B cell (primary cell): ENCODE measurements at regions of chr15 and their contacts with region 1.

Region 1: DNA sequence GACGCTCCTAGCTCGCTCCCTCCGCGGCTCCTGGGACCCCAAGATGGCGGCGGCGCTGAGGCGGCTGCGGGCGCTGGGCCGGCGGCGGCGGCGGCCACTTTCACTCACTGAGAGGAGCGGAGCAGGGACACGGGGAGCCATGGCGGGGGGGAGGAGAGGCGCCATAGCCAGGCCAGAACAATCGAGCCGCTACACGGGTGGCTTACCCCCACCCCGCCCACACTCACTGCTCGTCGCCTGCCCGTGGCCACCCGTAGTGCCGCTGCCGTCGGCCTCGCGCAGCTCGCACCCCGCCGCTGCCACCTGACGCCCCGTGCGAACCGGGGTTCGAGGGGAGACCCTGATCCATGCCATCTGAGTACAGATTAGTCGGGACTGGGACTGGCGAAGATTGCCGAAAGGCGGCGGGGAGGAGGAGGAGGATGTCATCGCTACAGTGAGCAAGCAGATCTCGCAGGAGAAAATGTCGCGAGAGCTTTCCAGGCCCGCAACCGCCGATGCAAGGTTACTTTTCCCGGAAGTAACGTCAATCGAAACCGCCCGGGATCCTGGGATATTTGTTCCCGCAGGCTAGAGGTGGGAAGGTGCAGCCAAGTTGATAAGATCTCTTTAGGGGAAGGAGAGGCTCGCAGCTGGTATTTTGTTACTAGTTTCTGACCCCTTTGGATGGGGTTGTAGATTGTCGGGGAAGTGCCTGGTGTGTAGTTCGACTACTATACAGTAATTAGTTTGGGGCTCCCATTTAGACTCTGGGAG is at the start of gene INO80:
- DNase-seq: peak; percentile 98
- ATAC-seq: peak; percentile 66
- H3K4me3 ChIP-seq: peak within 1 kb of the TSS; percentile 73 to 92 (median 80)
- H3K4me3 Mint-ChIP-seq: peak within 1 kb of the TSS; percentile 100
- H3K27ac ChIP-seq: peak within 1 kb of the TSS; percentile 93
- H3K27ac Mint-ChIP-seq: peak within 1 kb of the TSS; percentile 100
- H3K4me1 ChIP-seq: peaks cover 16 to 17% of the 10 kb centered on the region in 2 donors
- H3K4me1 Mint-ChIP-seq: peaks cover 26% of the 10 kb centered on the region
- H3K27me3 ChIP-seq: no peaks in the 10 kb centered on the region
- H3K27me3 Mint-ChIP-seq: no peaks in the 10 kb centered on the region
- CTCF ChIP-seq: no peak
- total RNA-seq, gene INO80: 55.7 and 57.8 TPM in 2 replicates

Region 2: DNA sequence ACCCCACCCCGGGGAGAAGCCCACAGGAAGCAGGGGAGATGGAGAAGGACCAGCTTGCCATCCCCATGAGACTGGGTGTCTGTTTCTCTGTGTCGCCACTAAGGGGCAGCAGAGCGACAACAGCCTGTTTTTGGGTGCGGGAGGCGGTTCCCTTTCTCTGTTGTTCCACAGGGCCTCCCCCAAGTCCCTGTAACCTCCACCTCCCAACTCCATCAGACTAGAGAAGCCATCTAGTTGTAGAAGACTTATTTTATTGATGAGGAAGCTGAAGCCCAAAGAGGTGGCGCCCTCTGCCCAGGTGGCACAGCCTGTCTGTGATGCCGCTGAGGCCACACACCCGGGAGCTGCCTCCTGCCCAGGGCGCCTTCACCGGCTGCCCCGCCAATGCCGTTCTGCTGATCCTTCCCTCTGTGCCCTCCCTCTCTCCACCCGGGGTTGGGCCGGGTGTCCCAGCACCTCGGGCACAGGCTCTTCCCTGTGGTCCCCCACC is 771.6 kb before region 1 on chr15:
- CTCF ChIA-PET with region 1: no interaction called
- POLR2A ChIA-PET with region 1: no interaction called
- intact Hi-C with region 1: no loop called
- DNase-seq: peak; percentile 77
- ATAC-seq: peak; percentile 88
- H3K4me3 ChIP-seq: no peak overlapping the region
- H3K4me3 Mint-ChIP-seq: no peak overlapping the region
- H3K27ac ChIP-seq: no peak overlapping the region
- H3K27ac Mint-ChIP-seq: no peak overlapping the region
- H3K4me1 ChIP-seq: no peaks in the 10 kb centered on the region
- H3K4me1 Mint-ChIP-seq: no peaks in the 10 kb centered on the region
- H3K27me3 ChIP-seq: no peaks in the 10 kb centered on the region
- H3K27me3 Mint-ChIP-seq: no peaks in the 10 kb centered on the region
- CTCF ChIP-seq: peak; percentile 83

Region 3: DNA sequence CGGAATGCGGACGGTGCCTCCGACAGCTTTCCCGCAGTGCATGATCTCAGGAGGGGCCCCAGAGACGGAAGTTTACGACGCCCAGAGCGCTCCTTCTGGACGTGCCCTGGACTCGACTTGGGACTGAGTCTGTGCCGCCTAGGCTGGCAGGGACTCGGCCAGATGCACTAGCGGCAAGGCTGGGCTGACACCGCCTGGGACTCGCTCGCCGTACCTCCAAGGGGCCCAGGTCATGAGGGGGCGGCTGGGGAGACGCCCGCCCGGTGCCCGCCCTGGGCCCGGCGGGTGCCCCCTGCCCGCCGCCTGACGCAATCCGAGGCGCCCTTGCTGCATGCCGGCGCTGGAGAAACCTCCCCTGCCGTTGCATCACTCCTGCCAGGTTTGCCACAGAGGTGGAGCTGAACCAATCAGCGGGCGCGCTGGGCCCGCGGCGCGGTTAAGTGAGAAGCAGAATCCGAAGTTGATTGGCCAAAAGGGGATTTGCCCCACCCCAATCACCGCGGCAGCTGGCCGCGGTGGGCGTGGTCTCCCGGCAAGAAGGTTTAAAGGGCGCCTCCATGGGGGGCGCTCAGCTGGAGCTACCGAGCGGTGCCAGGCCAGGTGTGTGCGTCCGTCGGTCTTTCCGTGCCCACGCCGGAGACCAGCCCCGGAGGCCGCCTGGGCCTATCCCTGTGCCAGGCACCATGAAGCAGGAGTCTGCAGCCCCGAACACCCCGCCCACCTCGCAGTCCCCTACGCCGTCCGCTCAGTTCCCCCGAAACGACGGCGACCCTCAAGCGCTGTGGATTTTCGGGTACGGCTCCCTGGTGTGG is 163.2 kb before region 1 on chr15 and contains the start of gene CHAC1:
- CTCF ChIA-PET with region 1: no interaction called
- POLR2A ChIA-PET with region 1: interaction called, 3 read pairs
- intact Hi-C with region 1: loop called (anchors 5 kb)
- DNase-seq: peak; percentile 95
- ATAC-seq: peak; percentile 97
- H3K4me3 ChIP-seq: peak within 1 kb of the TSS; percentile 40 to 74 (median 64)
- H3K4me3 Mint-ChIP-seq: peak within 1 kb of the TSS; percentile 93
- H3K27ac ChIP-seq: peak within 1 kb of the TSS in 1 of 2 donors; percentile 25
- H3K27ac Mint-ChIP-seq: peak within 1 kb of the TSS; percentile 84
- H3K4me1 ChIP-seq: peaks cover 9 to 14% of the 10 kb centered on the region in 2 donors
- H3K4me1 Mint-ChIP-seq: peaks cover 18% of the 10 kb centered on the region
- H3K27me3 ChIP-seq: peaks cover 0 to 14% (median 2%) of the 10 kb centered on the region in 4 experiments
- H3K27me3 Mint-ChIP-seq: peaks cover 9% of the 10 kb centered on the region
- CTCF ChIP-seq: no peak
- total RNA-seq, gene CHAC1: 3.1 and 3.6 TPM in 2 replicates

Region 4: DNA sequence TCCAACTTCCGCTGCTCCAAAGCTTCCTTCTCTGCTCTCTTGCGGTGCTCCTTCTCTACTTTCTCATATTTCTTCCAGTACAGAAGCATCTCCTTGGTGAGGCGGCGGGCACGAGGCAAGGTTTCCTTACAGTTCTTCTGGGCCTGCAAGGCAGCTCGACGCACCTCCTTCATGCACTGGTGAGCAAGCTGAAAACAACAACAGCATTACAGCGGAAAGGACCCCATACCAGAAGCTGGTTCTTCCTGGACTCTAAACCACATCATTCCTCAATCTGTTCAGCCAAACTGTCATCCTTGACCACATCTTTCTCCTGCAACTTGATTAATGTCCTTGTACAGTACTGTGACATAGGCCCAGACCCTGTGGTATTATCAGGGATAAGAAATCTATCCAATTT is 36.6 kb before region 1 on chr15:
- CTCF ChIA-PET with region 1: no interaction called
- POLR2A ChIA-PET with region 1: no interaction called
- intact Hi-C with region 1: loop called (anchors 5 kb)
- DNase-seq: peak; percentile 60
- ATAC-seq: peak; percentile 83
- H3K4me3 ChIP-seq: no peak overlapping the region
- H3K4me3 Mint-ChIP-seq: peak overlapping the region; percentile 73
- H3K27ac ChIP-seq: peak overlapping the region; percentile 79 to 84
- H3K27ac Mint-ChIP-seq: peak overlapping the region; percentile 93
- H3K4me1 ChIP-seq: peaks cover 20 to 24% of the 10 kb centered on the region in 2 donors
- H3K4me1 Mint-ChIP-seq: peaks cover 21% of the 10 kb centered on the region
- H3K27me3 ChIP-seq: no peaks in the 10 kb centered on the region
- H3K27me3 Mint-ChIP-seq: no peaks in the 10 kb centered on the region
- CTCF ChIP-seq: no peak

Region 5: DNA sequence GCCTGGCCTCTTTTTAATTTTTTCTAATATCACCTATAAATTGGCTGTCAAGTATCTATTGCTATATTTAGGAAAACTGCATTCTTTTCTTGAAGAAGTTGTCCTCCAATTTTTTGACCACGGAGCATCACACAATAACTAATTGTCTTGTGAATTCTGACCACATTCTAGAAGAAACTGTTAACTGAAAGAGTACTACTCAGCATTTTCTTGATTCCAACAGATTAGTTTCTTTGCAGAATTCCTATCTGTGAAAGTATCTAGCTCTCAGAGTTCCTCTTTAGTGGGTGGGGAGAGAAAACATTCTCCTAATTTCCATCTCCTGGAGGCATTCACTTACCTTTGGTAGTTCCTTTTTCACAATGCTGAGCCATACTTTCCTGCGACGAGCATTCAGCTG is 31.3 kb before region 1 on chr15:
- CTCF ChIA-PET with region 1: no interaction called
- POLR2A ChIA-PET with region 1: no interaction called
- intact Hi-C with region 1: loop called (anchors 2 kb)
- DNase-seq: no peak
- ATAC-seq: no peak
- H3K4me3 ChIP-seq: no peak overlapping the region
- H3K4me3 Mint-ChIP-seq: no peak overlapping the region
- H3K27ac ChIP-seq: peak overlapping the region in 1 of 2 donors; percentile 18
- H3K27ac Mint-ChIP-seq: peak overlapping the region; percentile 64
- H3K4me1 ChIP-seq: peaks cover 11 to 15% of the 10 kb centered on the region in 2 donors
- H3K4me1 Mint-ChIP-seq: peaks cover 24% of the 10 kb centered on the region
- H3K27me3 ChIP-seq: no peaks in the 10 kb centered on the region
- H3K27me3 Mint-ChIP-seq: no peaks in the 10 kb centered on the region
- CTCF ChIP-seq: no peak

Region 6: GRCh38 chr15:41331833-41332787 is 215.8 kb after region 1 on chr15 and contains the start of gene OIP5:
- CTCF ChIA-PET with region 1: interaction called, 3 read pairs
- POLR2A ChIA-PET with region 1: interaction called, 5 read pairs
- intact Hi-C with region 1: loop called (anchors 1 kb)
- DNase-seq: peak; percentile 98
- ATAC-seq: peak; percentile 94
- H3K4me3 ChIP-seq: peak within 1 kb of the TSS; percentile 84 to 98 (median 89)
- H3K4me3 Mint-ChIP-seq: peak within 1 kb of the TSS; percentile 99
- H3K27ac ChIP-seq: peak within 1 kb of the TSS; percentile 45 to 76
- H3K27ac Mint-ChIP-seq: peak within 1 kb of the TSS; percentile 95
- H3K4me1 ChIP-seq: peaks cover 13 to 19% of the 10 kb centered on the region in 2 donors
- H3K4me1 Mint-ChIP-seq: peaks cover 27% of the 10 kb centered on the region
- H3K27me3 ChIP-seq: no peaks in the 10 kb centered on the region
- H3K27me3 Mint-ChIP-seq: no peaks in the 10 kb centered on the region
- CTCF ChIP-seq: peak; percentile 57
- total RNA-seq, gene OIP5: 0.84 and 2.3 TPM in 2 replicates

Region 7: DNA sequence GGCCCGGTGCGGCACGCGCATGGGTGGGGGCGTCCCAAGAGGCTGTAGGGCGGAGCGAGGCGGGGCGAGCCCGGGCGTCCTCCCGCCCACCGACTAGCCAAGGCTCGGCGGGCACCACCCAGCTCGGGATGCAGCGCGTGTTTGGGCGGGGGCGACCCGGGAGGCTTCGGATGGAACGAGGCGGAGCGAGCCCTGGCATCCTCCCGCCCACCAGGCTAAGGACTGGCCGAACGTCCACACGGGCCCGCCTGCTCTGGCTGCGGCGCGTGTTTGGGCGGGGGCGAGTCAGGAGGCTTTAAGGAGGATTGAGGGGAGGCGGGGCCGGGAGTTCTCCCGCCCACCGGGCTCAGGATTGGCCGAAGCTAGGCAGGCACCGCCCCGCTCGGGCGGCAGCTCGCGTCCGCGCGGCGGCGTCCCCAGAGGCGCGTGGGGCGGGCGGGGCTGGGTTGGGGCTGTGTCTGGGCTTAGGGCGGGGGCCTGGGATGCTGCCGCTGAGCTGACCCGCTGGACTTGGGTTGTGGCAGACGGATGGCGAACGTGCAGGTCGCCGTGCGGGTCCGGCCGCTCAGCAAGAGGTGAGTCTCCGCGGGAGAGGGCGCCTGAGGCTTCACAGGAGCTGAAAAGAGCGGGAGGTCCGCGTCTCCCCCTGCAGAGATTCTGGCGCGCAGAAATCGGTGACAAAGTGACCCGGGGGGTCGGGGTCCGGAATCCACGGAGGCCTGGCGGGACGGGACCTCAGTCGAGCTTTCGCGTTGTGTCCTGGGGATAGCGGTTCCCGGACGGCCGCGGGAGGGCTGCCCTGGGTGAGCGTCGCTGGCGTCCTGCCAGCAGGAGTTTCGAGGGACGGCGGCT is 1459.1 kb after region 1 on chr15 and contains the start of gene STARD9:
- CTCF ChIA-PET with region 1: no interaction called
- POLR2A ChIA-PET with region 1: no interaction called
- intact Hi-C with region 1: loop called (anchors 5 kb)
- DNase-seq: peak; percentile 98
- ATAC-seq: peak; percentile 88
- H3K4me3 ChIP-seq: peak within 1 kb of the TSS; percentile 61 to 93 (median 88)
- H3K4me3 Mint-ChIP-seq: peak within 1 kb of the TSS; percentile 96
- H3K27ac ChIP-seq: peak within 1 kb of the TSS; percentile 67 to 69
- H3K27ac Mint-ChIP-seq: peak within 1 kb of the TSS; percentile 89
- H3K4me1 ChIP-seq: peaks cover 14 to 15% of the 10 kb centered on the region in 2 donors
- H3K4me1 Mint-ChIP-seq: peaks cover 19% of the 10 kb centered on the region
- H3K27me3 ChIP-seq: peaks cover 0 to 4% (median 0%) of the 10 kb centered on the region in 4 experiments
- H3K27me3 Mint-ChIP-seq: peaks cover 9% of the 10 kb centered on the region
- CTCF ChIP-seq: no peak
- total RNA-seq, gene STARD9: 20.8 and 23.1 TPM in 2 replicates